HepG2 (cell line): ENCODE measurements at regions of chr17 and their contacts with region 1.

Region 1: GRCh38 chr17:40909351-40909750 is 24.3 kb upstream of the KRT20 start:
- DNase-seq: peak; percentile 92
- ATAC-seq: peak; percentile 93
- H3K4me3 ChIP-seq: no peak overlapping the region
- H3K27ac ChIP-seq: no peak overlapping the region
- H3K4me1 ChIP-seq: peaks cover 33% of the 10 kb centered on the region
- H3K27me3 ChIP-seq: no peaks in the 10 kb centered on the region
- CTCF ChIP-seq: peak; percentile 94
- EP300 ChIP-seq: no peak
- POLR2A ChIP-seq: no peak
- RAD21 ChIP-seq: peak; percentile 99

Region 2: GRCh38 chr17:40862985-40863733 is 46.2 kb before region 1 on chr17:
- CTCF ChIA-PET with region 1: interaction called, 3 read pairs
- POLR2A ChIA-PET with region 1: no interaction called
- in situ Hi-C with region 1: no loop called
- intact Hi-C with region 1: loop called (anchors 2 kb)
- DNase-seq: peak; percentile 48
- ATAC-seq: peak; percentile 97
- H3K4me3 ChIP-seq: no peak overlapping the region
- H3K27ac ChIP-seq: no peak overlapping the region
- H3K4me1 ChIP-seq: no peaks in the 10 kb centered on the region
- H3K27me3 ChIP-seq: no peaks in the 10 kb centered on the region; a peak in 1 of 5 replicates
- CTCF ChIP-seq: peak; percentile 88
- EP300 ChIP-seq: no peak
- POLR2A ChIP-seq: no peak
- RAD21 ChIP-seq: peak; percentile 69

Region 3: DNA sequence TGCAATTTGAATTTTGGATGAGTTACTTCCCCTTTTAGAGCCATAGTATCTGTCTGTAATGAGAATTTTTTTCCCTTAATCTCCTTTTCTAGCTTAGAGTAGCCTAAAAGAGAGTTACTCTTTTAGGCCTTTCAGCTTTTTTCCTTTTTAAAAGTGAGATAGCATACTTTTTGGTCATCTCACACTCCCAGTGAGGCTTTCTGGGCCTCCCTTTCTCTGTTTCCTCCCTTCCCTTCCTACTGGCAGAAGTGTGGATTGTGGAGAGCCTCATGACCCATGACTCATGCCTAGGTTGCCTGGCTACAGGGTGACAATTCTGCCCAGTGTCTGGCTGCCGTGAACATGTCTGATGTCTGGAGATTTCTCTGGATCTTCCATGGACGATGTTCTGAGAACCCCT is 12.9 kb after region 1 on chr17:
- CTCF ChIA-PET with region 1: no interaction called
- POLR2A ChIA-PET with region 1: no interaction called
- in situ Hi-C with region 1: no loop called
- intact Hi-C with region 1: no loop called
- DNase-seq: peak; percentile 68
- ATAC-seq: peak; percentile 75
- H3K4me3 ChIP-seq: no peak overlapping the region
- H3K27ac ChIP-seq: no peak overlapping the region
- H3K4me1 ChIP-seq: peaks cover 15% of the 10 kb centered on the region
- H3K27me3 ChIP-seq: no peaks in the 10 kb centered on the region
- CTCF ChIP-seq: no peak
- EP300 ChIP-seq: no peak
- POLR2A ChIP-seq: no peak
- RAD21 ChIP-seq: no peak

Region 4: DNA sequence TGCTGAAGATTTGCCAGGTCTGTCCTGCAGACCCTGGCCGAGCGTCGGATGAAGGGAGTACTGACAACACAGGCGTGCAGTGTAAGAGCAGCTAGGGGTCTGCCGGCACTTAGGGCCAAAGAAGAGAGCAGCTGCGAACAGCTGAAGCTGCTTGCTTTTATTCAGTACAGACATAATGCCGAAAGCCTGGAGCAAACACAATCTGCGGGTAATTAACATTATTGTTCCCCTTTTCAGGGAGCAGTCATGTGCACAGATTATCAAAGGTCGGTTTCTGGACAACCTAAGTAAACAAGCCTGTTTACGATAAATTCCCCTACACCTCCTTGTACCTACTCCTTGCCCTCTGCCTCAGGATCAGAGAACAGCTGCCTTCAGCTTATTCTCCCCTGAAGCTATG is 40.1 kb after region 1 on chr17:
- CTCF ChIA-PET with region 1: no interaction called
- POLR2A ChIA-PET with region 1: no interaction called
- in situ Hi-C with region 1: no loop called
- intact Hi-C with region 1: no loop called
- DNase-seq: peak; percentile 57
- ATAC-seq: peak; percentile 74
- H3K4me3 ChIP-seq: peak overlapping the region in 1 of 3 experiments; percentile 13; a peak in 1 of 6 replicates
- H3K27ac ChIP-seq: peak overlapping the region; percentile 39
- H3K4me1 ChIP-seq: peaks cover 83% of the 10 kb centered on the region
- H3K27me3 ChIP-seq: no peaks in the 10 kb centered on the region
- CTCF ChIP-seq: no peak
- EP300 ChIP-seq: no peak
- POLR2A ChIP-seq: no peak
- RAD21 ChIP-seq: no peak

Region 5: DNA sequence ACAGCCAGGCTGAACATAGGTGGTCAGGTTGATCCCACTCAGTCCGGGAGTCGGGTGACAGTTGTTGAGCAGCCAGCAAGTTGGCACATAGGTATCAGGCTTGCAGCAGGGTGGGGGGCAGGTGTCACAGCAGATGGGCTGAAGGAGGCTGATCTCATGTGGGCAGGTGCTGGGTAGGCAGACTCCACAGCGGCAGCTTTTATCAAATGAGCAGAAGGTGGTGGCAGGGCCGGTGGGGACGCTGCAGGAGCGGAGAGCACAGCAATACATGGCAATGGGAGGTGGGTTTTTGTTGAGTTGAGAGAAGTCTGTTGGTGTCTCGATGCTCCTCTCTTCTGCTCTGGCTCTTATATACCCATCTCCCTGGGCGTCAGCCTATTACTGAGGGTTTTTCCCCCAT is 99.5 kb after region 1 on chr17 and contains the start of gene KRTAP3-1:
- CTCF ChIA-PET with region 1: no interaction called
- POLR2A ChIA-PET with region 1: no interaction called
- in situ Hi-C with region 1: loop called (anchors 5 kb)
- intact Hi-C with region 1: loop called (anchors 5 kb)
- DNase-seq: peak; percentile 28
- ATAC-seq: peak; percentile 74
- H3K4me3 ChIP-seq: no peak within 1 kb of the TSS; a peak in 1 of 6 replicates
- H3K27ac ChIP-seq: peak within 1 kb of the TSS; percentile 70
- H3K4me1 ChIP-seq: peaks cover 71% of the 10 kb centered on the region
- H3K27me3 ChIP-seq: no peaks in the 10 kb centered on the region
- CTCF ChIP-seq: no peak
- EP300 ChIP-seq: no peak
- POLR2A ChIP-seq: no peak
- RAD21 ChIP-seq: no peak
- total RNA-seq, gene KRTAP3-1: 0.29 and 0.81 TPM in 2 replicates

Region 6: DNA sequence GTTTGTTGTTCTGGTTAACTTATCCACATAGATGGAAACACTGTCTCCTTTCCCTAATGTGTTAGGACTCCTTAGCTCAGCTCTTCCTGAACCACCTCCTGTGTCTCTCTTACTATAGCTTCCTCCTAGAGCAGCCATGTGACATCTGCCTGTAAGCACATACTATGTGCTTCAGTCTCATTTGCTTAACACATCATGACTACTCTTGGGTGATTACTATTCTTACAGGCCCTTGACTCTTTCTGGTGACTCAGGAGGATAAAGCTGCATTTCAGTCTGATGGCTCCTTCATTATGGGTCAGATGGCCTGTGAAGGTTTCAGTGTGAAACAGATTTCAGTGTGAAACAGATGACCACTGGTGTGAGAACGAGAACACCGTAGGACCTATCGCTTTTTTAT is 269.0 kb after region 1 on chr17:
- CTCF ChIA-PET with region 1: no interaction called
- POLR2A ChIA-PET with region 1: no interaction called
- in situ Hi-C with region 1: no loop called
- intact Hi-C with region 1: loop called (anchors 10 kb)
- DNase-seq: no peak
- ATAC-seq: no peak
- H3K4me3 ChIP-seq: no peak overlapping the region
- H3K27ac ChIP-seq: no peak overlapping the region
- H3K4me1 ChIP-seq: no peaks in the 10 kb centered on the region
- H3K27me3 ChIP-seq: peaks cover 0 to 33% of the 10 kb centered on the region in 2 experiments; a peak in 3 of 5 replicates
- CTCF ChIP-seq: no peak
- EP300 ChIP-seq: no peak
- POLR2A ChIP-seq: no peak
- RAD21 ChIP-seq: no peak

Region 7: DNA sequence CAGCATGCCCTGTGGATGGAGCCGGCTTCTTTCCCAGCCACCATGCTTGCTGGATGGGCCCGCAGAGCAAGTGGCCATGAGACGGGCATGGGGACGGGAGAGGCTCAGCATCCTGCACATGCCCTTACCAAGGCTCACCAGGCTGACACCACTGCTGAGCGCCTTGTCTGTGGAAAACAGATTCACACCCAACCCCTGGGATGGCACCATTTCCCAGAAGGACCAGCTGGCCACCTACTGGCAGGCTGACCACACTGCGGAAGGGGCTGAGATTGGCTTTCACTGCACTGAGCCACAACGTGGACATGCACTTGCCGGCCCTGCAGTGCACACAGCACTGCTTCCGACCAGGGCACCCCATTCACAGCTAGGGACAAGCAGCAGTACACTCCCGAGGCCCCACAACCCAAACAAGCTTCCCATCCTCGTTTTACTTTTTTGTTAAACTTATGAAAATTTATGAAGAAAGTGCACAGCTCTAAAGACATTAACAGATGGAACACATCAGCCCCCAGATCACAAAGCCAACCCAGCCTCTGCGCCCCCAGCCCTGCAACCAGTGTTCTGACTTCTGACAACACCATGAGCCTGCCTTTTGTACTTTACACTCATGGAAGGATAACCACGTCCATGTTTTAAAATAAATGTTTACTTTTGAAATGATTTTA is 420.1 kb after region 1 on chr17:
- CTCF ChIA-PET with region 1: interaction called, 32 read pairs
- POLR2A ChIA-PET with region 1: no interaction called
- in situ Hi-C with region 1: loop called (anchors 5 kb)
- intact Hi-C with region 1: loop called (anchors 1 kb)
- DNase-seq: peak; percentile 52
- ATAC-seq: peak; percentile 87
- H3K4me3 ChIP-seq: no peak overlapping the region
- H3K27ac ChIP-seq: no peak overlapping the region
- H3K4me1 ChIP-seq: no peaks in the 10 kb centered on the region
- H3K27me3 ChIP-seq: peaks cover 0 to 18% of the 10 kb centered on the region in 2 experiments; a peak in 2 of 5 replicates
- CTCF ChIP-seq: peak; percentile 96
- EP300 ChIP-seq: no peak
- POLR2A ChIP-seq: no peak
- RAD21 ChIP-seq: peak; percentile 89

Region 8: GRCh38 chr17:41548844-41549595 is 639.7 kb after region 1 on chr17:
- CTCF ChIA-PET with region 1: interaction called, 13 read pairs
- POLR2A ChIA-PET with region 1: no interaction called
- in situ Hi-C with region 1: no loop called
- intact Hi-C with region 1: no loop called
- DNase-seq: peak; percentile 82
- ATAC-seq: peak; percentile 90
- H3K4me3 ChIP-seq: peak overlapping the region; percentile 18 to 67 (median 22); a peak in 4 of 6 replicates
- H3K27ac ChIP-seq: peak overlapping the region; percentile 16
- H3K4me1 ChIP-seq: peaks cover 48% of the 10 kb centered on the region
- H3K27me3 ChIP-seq: peaks cover 4 to 28% of the 10 kb centered on the region in 2 experiments; a peak in 4 of 5 replicates
- CTCF ChIP-seq: peak; percentile 89
- EP300 ChIP-seq: no peak
- POLR2A ChIP-seq: no peak
- RAD21 ChIP-seq: peak; percentile 91